GM10248 (cell line): ENCODE measurements at regions of chr10 and their contacts with region 1.

Region 1: DNA sequence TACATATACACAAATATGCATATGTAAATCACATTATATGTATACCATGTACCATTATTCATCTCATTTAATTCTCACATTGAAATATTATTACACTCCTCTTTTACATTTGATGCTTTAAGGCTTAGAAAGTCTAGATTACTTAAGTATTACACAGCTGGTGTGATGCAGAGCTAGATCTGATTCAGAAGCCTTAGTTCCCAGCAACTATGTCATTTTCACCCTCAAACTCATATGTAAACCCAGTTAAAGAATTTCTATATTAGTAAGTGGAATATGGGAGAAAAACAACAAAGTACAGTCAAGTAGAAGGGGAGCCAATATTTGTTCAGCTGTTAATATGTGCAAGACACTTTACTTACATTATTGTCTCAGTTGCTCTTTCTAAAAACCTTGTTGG is 74.3 kb upstream of the CSTF2T start:
- DNase-seq: no peak
- CTCF ChIP-seq: no peak

Region 2: GRCh38 chr10:51733057-51733456 is 40.6 kb before region 1 on chr10:
- CTCF ChIA-PET with region 1: no interaction called
- POLR2A ChIA-PET with region 1: no interaction called
- DNase-seq: no peak
- CTCF ChIP-seq: no peak

Region 3: GRCh38 chr10:51789903-51790302 is 16.2 kb after region 1 on chr10:
- CTCF ChIA-PET with region 1: interaction called, 12 read pairs
- POLR2A ChIA-PET with region 1: no interaction called
- DNase-seq: no peak
- CTCF ChIP-seq: no peak

Region 4: GRCh38 chr10:51804866-51805265 is 31.2 kb after region 1 on chr10:
- CTCF ChIA-PET with region 1: no interaction called
- POLR2A ChIA-PET with region 1: no interaction called
- DNase-seq: no peak
- CTCF ChIP-seq: no peak